Caco-2 (cell line): ENCODE measurements at regions of chr2 and their contacts with region 1.

Region 1: GRCh38 chr2:78979380-78980151 is 45.9 kb upstream of the REG3G start:
- DNase-seq: peak; percentile 50 to 73
- H3K4me3 ChIP-seq: no peak overlapping the region
- H3K4me3 Mint-ChIP-seq: no peak overlapping the region
- H3K27ac Mint-ChIP-seq: no peak overlapping the region
- H3K4me1 ChIP-seq: no peaks in the 10 kb centered on the region
- H3K4me1 Mint-ChIP-seq: no peaks in the 10 kb centered on the region
- H3K27me3 ChIP-seq: no peaks in the 10 kb centered on the region
- H3K27me3 Mint-ChIP-seq: peaks cover 6% of the 10 kb centered on the region
- CTCF ChIP-seq: peak; percentile 89 to 91

Region 2: DNA sequence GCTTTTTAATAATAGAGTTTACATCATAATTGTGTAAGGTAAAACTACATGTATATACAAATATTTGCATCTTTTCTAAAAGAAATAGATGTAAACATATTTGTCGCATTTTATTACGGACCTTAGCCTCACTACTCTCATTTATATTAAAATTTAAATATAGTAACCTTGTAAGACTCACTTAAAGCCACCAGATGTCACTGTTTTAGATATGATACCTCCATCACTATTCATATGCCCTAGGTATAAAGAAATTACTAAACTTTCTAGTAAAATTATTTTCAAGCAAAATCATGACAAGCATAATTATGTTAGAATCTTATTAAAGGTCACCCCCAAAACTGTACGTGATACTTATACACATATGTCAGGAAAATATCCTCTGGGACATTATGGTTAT is 628.4 kb before region 1 on chr2:
- CTCF ChIA-PET with region 1: no interaction called
- POLR2A ChIA-PET with region 1: no interaction called
- intact Hi-C with region 1: loop called (anchors 5 kb)
- DNase-seq: no peak
- H3K4me3 ChIP-seq: no peak overlapping the region
- H3K4me3 Mint-ChIP-seq: no peak overlapping the region
- H3K27ac Mint-ChIP-seq: no peak overlapping the region
- H3K4me1 ChIP-seq: no peaks in the 10 kb centered on the region
- H3K4me1 Mint-ChIP-seq: no peaks in the 10 kb centered on the region
- H3K27me3 ChIP-seq: no peaks in the 10 kb centered on the region
- H3K27me3 Mint-ChIP-seq: no peaks in the 10 kb centered on the region
- CTCF ChIP-seq: peak; percentile 8 to 43

Region 3: DNA sequence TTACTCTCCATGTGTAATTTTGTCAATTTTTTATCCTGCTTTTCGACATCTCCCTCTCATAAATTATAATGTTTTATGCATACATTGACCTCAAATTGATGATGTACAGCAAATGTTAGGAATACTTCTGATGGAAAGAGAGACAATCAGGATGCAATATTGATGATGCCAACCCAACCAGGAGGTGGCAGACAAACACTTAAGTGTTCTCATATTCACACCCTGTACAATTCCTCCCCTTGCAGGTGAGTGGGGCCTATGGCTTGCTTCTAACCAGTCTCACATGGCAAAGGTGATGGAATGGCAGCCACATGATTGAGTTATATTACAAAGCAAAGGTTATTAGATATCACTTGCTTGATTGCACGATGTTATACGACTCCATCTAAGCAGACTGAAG is 548.3 kb before region 1 on chr2:
- CTCF ChIA-PET with region 1: no interaction called
- POLR2A ChIA-PET with region 1: no interaction called
- intact Hi-C with region 1: loop called (anchors 5 kb)
- DNase-seq: peak in 1 of 2 experiments; percentile 19
- H3K4me3 ChIP-seq: no peak overlapping the region
- H3K4me3 Mint-ChIP-seq: no peak overlapping the region
- H3K27ac Mint-ChIP-seq: no peak overlapping the region
- H3K4me1 ChIP-seq: no peaks in the 10 kb centered on the region
- H3K4me1 Mint-ChIP-seq: peaks cover 5% of the 10 kb centered on the region
- H3K27me3 ChIP-seq: no peaks in the 10 kb centered on the region
- H3K27me3 Mint-ChIP-seq: no peaks in the 10 kb centered on the region
- CTCF ChIP-seq: peak in 1 of 2 experiments; percentile 4

Region 4: GRCh38 chr2:78541451-78542267 is 437.9 kb before region 1 on chr2:
- CTCF ChIA-PET with region 1: no interaction called
- POLR2A ChIA-PET with region 1: no interaction called
- intact Hi-C with region 1: loop called (anchors 10 kb)
- DNase-seq: peak; percentile 94 to 98
- H3K4me3 ChIP-seq: peak overlapping the region; percentile 79
- H3K4me3 Mint-ChIP-seq: peak overlapping the region; percentile 87
- H3K27ac Mint-ChIP-seq: peak overlapping the region; percentile 96
- H3K4me1 ChIP-seq: peaks cover 7% of the 10 kb centered on the region; the same call in 1 of the 2 replicates
- H3K4me1 Mint-ChIP-seq: peaks cover 19% of the 10 kb centered on the region
- H3K27me3 ChIP-seq: no peaks in the 10 kb centered on the region
- H3K27me3 Mint-ChIP-seq: peaks cover 3% of the 10 kb centered on the region
- CTCF ChIP-seq: peak; percentile 50 to 77

Region 5: GRCh38 chr2:78676921-78677696 is 302.5 kb before region 1 on chr2:
- CTCF ChIA-PET with region 1: interaction called, 4 read pairs
- POLR2A ChIA-PET with region 1: no interaction called
- intact Hi-C with region 1: loop called (anchors 1 kb)
- DNase-seq: no peak
- H3K4me3 ChIP-seq: no peak overlapping the region
- H3K4me3 Mint-ChIP-seq: no peak overlapping the region
- H3K27ac Mint-ChIP-seq: no peak overlapping the region
- H3K4me1 ChIP-seq: no peaks in the 10 kb centered on the region
- H3K4me1 Mint-ChIP-seq: peaks cover 6% of the 10 kb centered on the region
- H3K27me3 ChIP-seq: no peaks in the 10 kb centered on the region
- H3K27me3 Mint-ChIP-seq: peaks cover 7% of the 10 kb centered on the region
- CTCF ChIP-seq: no peak

Region 6: GRCh38 chr2:78734221-78734620 is 245.3 kb before region 1 on chr2:
- CTCF ChIA-PET with region 1: no interaction called
- POLR2A ChIA-PET with region 1: no interaction called
- intact Hi-C with region 1: no loop called
- DNase-seq: no peak
- H3K4me3 ChIP-seq: no peak overlapping the region
- H3K4me3 Mint-ChIP-seq: no peak overlapping the region
- H3K27ac Mint-ChIP-seq: no peak overlapping the region
- H3K4me1 ChIP-seq: no peaks in the 10 kb centered on the region
- H3K4me1 Mint-ChIP-seq: no peaks in the 10 kb centered on the region
- H3K27me3 ChIP-seq: no peaks in the 10 kb centered on the region
- H3K27me3 Mint-ChIP-seq: peaks cover 4% of the 10 kb centered on the region
- CTCF ChIP-seq: no peak

Region 7: GRCh38 chr2:78861546-78861945 is 118.0 kb before region 1 on chr2:
- CTCF ChIA-PET with region 1: no interaction called
- POLR2A ChIA-PET with region 1: no interaction called
- intact Hi-C with region 1: loop called (anchors 1 kb)
- DNase-seq: peak in 1 of 2 experiments; percentile 35
- H3K4me3 ChIP-seq: no peak overlapping the region
- H3K4me3 Mint-ChIP-seq: no peak overlapping the region
- H3K27ac Mint-ChIP-seq: no peak overlapping the region
- H3K4me1 ChIP-seq: no peaks in the 10 kb centered on the region
- H3K4me1 Mint-ChIP-seq: peaks cover 3% of the 10 kb centered on the region
- H3K27me3 ChIP-seq: no peaks in the 10 kb centered on the region
- H3K27me3 Mint-ChIP-seq: peaks cover 13% of the 10 kb centered on the region
- CTCF ChIP-seq: peak; percentile 47 to 56

Region 8: GRCh38 chr2:78963881-78964280 is 15.7 kb before region 1 on chr2:
- CTCF ChIA-PET with region 1: no interaction called
- POLR2A ChIA-PET with region 1: no interaction called
- intact Hi-C with region 1: no loop called
- DNase-seq: no peak
- H3K4me3 ChIP-seq: no peak overlapping the region
- H3K4me3 Mint-ChIP-seq: no peak overlapping the region
- H3K27ac Mint-ChIP-seq: no peak overlapping the region
- H3K4me1 ChIP-seq: no peaks in the 10 kb centered on the region; the same call in 1 of the 2 replicates
- H3K4me1 Mint-ChIP-seq: peaks cover 7% of the 10 kb centered on the region
- H3K27me3 ChIP-seq: no peaks in the 10 kb centered on the region
- H3K27me3 Mint-ChIP-seq: peaks cover 11% of the 10 kb centered on the region
- CTCF ChIP-seq: no peak

Region 9: GRCh38 chr2:79025421-79025820 is 45.9 kb after region 1 on chr2 and contains the start of gene REG3G:
- CTCF ChIA-PET with region 1: no interaction called
- POLR2A ChIA-PET with region 1: interaction called, 16 read pairs
- intact Hi-C with region 1: no loop called
- DNase-seq: no peak
- H3K4me3 ChIP-seq: no peak within 1 kb of the TSS
- H3K4me3 Mint-ChIP-seq: no peak within 1 kb of the TSS
- H3K27ac Mint-ChIP-seq: no peak within 1 kb of the TSS
- H3K4me1 ChIP-seq: no peaks in the 10 kb centered on the region
- H3K4me1 Mint-ChIP-seq: peaks cover 4% of the 10 kb centered on the region
- H3K27me3 ChIP-seq: no peaks in the 10 kb centered on the region
- H3K27me3 Mint-ChIP-seq: peaks cover 8% of the 10 kb centered on the region
- CTCF ChIP-seq: no peak
- total RNA-seq, gene REG3G: not detected in 2 replicates